ENCODE measurements at regions of chr14 and their contacts with region 1.

Region 1: GRCh38 chr14:49767562-49768300 is at the start of gene KLHDC2:
- DNase-seq: peak; percentile 91
- H3K4me3 ChIP-seq: peak within 1 kb of the TSS; percentile 88 to 99
- H3K27ac ChIP-seq: peak within 1 kb of the TSS; percentile 96 to 98
- H3K4me1 ChIP-seq: peaks cover 27% of the 10 kb centered on the region
- H3K27me3 ChIP-seq: no peaks in the 10 kb centered on the region
- CTCF ChIP-seq: peak in 1 of 3 experiments; percentile 27
- POLR2A ChIP-seq: peak; percentile 62
- total RNA-seq, gene KLHDC2: 74.4 to 90.7 TPM

Region 2: GRCh38 chr14:49633640-49634546 is 133.8 kb before region 1 on chr14:
- intact Hi-C with region 1: loop called (anchors 5 kb)
- DNase-seq: peak; percentile 95
- H3K4me3 ChIP-seq: peak overlapping the region; percentile 95 to 99
- H3K27ac ChIP-seq: peak overlapping the region; percentile 96
- H3K4me1 ChIP-seq: peaks cover 19% of the 10 kb centered on the region
- H3K27me3 ChIP-seq: no peaks in the 10 kb centered on the region
- CTCF ChIP-seq: peak; percentile 75 to 85 (median 78)
- POLR2A ChIP-seq: no peak

Region 3: GRCh38 chr14:49946320-49947141 is 178.8 kb after region 1 on chr14:
- intact Hi-C with region 1: no loop called
- DNase-seq: no peak
- H3K4me3 ChIP-seq: no peak overlapping the region
- H3K27ac ChIP-seq: no peak overlapping the region
- H3K4me1 ChIP-seq: no peaks in the 10 kb centered on the region
- H3K27me3 ChIP-seq: no peaks in the 10 kb centered on the region
- CTCF ChIP-seq: no peak
- POLR2A ChIP-seq: no peak

Region 4: DNA sequence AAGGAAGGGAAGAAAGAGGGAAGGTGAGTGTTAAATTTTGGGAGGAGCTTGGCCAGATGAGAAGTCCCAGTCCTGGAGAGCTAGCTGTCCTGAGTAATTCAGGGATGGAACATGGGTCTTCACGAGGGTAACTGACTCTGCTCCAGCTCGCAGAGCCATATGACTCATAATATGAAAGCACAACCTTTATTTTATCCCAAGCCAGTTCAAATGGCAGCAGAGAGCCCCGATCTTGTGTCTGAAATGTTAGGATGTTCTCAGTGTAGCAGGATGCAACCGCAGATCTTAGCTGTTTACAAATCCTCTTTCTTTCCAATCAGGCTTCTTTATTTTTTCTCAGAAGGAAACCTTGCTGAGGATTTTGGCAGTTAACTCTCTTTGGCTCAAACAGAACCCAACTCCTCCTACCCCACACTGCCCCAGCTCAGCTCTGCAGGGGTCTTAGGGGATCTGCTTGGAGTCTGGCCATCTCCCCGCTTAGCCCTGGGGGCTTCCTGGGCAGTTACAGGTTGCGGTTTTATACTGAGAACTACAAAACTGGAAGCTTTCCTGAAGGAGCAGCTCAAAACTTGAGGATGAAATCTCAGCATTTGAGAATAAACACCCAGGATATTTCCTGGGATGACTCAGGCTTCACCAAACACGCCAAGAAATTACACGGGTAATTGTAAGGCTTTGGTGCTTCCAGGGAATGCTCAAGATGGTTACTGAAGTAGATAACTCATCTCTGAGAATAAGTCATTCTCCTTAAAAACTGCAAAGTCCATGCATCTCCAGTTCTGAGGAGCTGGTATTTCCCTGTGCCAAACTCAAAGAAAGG is 256.1 kb after region 1 on chr14:
- intact Hi-C with region 1: no loop called
- DNase-seq: peak; percentile 22
- H3K4me3 ChIP-seq: no peak overlapping the region
- H3K27ac ChIP-seq: peak overlapping the region in 1 of 2 donors; percentile 57
- H3K4me1 ChIP-seq: no peaks in the 10 kb centered on the region
- H3K27me3 ChIP-seq: no peaks in the 10 kb centered on the region
- CTCF ChIP-seq: no peak
- POLR2A ChIP-seq: no peak

Measured in testis (tissue), 5 donors.